HepG2 (cell line): ENCODE measurements at regions of chr10 and their contacts with region 1.

Region 1: DNA sequence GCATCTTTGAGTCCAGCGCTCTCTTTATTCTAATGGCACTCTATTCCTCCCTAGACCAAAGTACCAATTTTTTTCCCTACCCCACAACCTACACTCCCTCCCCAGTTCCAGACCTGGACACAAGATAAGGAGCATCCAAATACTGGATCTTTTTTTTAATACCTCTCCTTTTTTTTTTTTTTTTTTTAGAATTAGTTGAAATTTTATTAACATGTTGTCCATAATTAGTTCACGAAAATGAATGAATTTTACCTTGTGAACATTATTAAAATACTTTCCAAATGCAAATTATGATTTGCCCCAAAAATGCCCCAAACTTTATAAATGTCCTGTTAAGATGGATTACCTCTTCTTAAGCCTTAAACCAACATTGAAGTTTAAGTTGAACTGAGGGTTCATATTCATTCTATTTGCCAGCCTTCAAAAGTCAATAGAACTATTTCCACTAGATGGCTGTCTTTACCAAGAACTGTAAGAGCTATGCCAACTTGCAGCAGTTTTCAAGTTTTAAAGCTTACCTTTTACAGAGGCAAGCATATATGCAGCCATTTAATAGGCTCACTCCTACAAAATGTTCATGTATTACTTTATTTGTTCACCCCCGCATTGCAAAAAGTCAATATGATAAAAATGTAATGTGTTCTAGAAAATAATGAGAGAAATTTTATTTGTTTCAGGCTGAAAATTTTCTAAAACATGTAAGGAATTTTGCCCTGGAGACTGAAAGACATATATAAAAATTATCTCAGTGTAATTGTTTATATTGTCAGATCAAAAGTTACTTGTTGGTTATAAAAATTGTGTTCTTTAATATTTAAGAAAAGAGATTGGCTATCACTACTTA is 39.7 kb upstream of the TNKS2 start:
- DNase-seq: peak; percentile 72
- ATAC-seq: peak; percentile 71
- H3K4me3 ChIP-seq: no peak overlapping the region
- H3K27ac ChIP-seq: no peak overlapping the region
- H3K4me1 ChIP-seq: no peaks in the 10 kb centered on the region
- H3K27me3 ChIP-seq: no peaks in the 10 kb centered on the region; a peak in 1 of 5 replicates
- CTCF ChIP-seq: peak; percentile 80
- EP300 ChIP-seq: no peak
- POLR2A ChIP-seq: no peak
- RAD21 ChIP-seq: peak; percentile 77

Region 2: DNA sequence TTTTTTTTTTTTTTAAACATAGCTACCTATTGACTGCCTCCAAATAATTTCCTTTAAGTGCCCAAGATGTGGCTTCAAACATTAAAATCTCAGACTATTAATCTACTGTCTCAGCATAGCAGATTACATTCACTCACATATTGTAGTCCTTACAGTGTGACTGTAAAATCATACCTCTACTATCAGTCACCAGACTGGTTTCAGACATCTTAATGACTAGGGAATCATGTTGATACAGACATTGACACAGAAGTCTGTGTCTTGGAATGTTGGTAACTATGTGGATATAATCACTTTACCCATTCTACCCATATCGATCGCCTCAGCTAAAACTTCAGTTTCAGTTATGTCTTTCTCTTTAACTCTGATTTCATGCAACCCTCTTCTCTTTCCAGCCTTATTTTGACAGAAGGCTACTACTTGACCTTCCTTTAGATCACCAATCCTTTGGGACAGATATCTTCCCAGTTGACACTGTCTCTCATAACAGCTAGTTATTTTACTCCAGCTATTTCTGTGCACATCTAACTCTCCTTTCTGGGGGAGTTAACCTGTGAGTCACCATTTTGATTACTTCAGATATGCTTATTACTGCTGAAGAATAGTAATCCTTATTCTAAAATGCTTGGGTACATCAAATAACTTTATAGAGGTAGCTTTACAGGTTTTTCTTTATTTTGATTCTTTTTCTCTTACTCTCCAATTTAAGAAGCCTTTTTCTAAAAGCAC is 46.7 kb after region 1 on chr10:
- CTCF ChIA-PET with region 1: no interaction called
- POLR2A ChIA-PET with region 1: no interaction called
- in situ Hi-C with region 1: no loop called
- intact Hi-C with region 1: loop called (anchors 2 kb)
- DNase-seq: no peak
- ATAC-seq: no peak
- H3K4me3 ChIP-seq: no peak overlapping the region
- H3K27ac ChIP-seq: peak overlapping the region; percentile 90
- H3K4me1 ChIP-seq: peaks cover 55% of the 10 kb centered on the region
- H3K27me3 ChIP-seq: no peaks in the 10 kb centered on the region
- CTCF ChIP-seq: no peak
- EP300 ChIP-seq: no peak
- POLR2A ChIP-seq: no peak
- RAD21 ChIP-seq: no peak

Region 3: GRCh38 chr10:91843083-91843482 is 84.6 kb after region 1 on chr10:
- CTCF ChIA-PET with region 1: no interaction called
- POLR2A ChIA-PET with region 1: no interaction called
- in situ Hi-C with region 1: no loop called
- intact Hi-C with region 1: loop called (anchors 1 kb)
- DNase-seq: no peak
- ATAC-seq: no peak
- H3K4me3 ChIP-seq: no peak overlapping the region
- H3K27ac ChIP-seq: no peak overlapping the region
- H3K4me1 ChIP-seq: no peaks in the 10 kb centered on the region
- H3K27me3 ChIP-seq: no peaks in the 10 kb centered on the region
- CTCF ChIP-seq: no peak
- EP300 ChIP-seq: no peak
- POLR2A ChIP-seq: no peak
- RAD21 ChIP-seq: no peak

Region 4: DNA sequence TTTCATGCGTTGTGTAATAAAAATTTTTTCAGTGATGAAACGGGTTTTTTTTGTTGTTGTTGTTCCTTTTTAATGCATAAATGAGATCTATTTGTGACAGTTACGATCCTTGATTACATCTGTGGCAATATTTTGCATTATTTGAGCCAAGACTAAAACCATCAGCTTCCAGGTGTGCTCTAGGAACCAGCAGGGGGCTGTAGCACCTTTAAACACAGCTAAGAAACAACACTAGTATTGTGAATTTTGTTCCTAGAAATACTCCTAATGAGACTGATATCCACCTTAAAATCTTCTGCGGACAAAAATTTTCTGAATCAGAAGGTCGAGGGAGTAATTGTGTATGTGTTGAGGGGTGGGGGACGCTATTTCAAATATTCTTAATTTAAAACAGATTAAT is 98.1 kb after region 1 on chr10:
- CTCF ChIA-PET with region 1: no interaction called
- POLR2A ChIA-PET with region 1: no interaction called
- in situ Hi-C with region 1: no loop called
- intact Hi-C with region 1: loop called (anchors 2 kb)
- DNase-seq: peak; percentile 12
- ATAC-seq: peak; percentile 68
- H3K4me3 ChIP-seq: no peak overlapping the region
- H3K27ac ChIP-seq: no peak overlapping the region
- H3K4me1 ChIP-seq: no peaks in the 10 kb centered on the region
- H3K27me3 ChIP-seq: no peaks in the 10 kb centered on the region
- CTCF ChIP-seq: peak; percentile 51
- EP300 ChIP-seq: no peak
- POLR2A ChIP-seq: no peak
- RAD21 ChIP-seq: no peak; the same call in 1 of the 2 replicates